CD4-positive, alpha-beta memory T cell (primary cell): ENCODE measurements at regions of chr15 and their contacts with region 1.

Region 1: GRCh38 chr15:52179278-52180195 is 11.7 kb downstream of the GNB5 start:
- DNase-seq: peak; percentile 89 to 93 (median 92)
- H3K4me3 ChIP-seq: peak overlapping the region; percentile 31 to 57
- H3K4me3 Mint-ChIP-seq: peak overlapping the region; percentile 93 to 97 (median 95)
- H3K27ac ChIP-seq: peak overlapping the region; percentile 96
- H3K27ac Mint-ChIP-seq: peak overlapping the region; percentile 89 to 99 (median 99)
- H3K4me1 ChIP-seq: peaks cover 26% of the 10 kb centered on the region
- H3K4me1 Mint-ChIP-seq: peaks cover 21 to 52% (median 36%) of the 10 kb centered on the region in 4 donors
- H3K27me3 ChIP-seq: no peaks in the 10 kb centered on the region
- H3K27me3 Mint-ChIP-seq: no peaks in the 10 kb centered on the region

Region 2: GRCh38 chr15:51737280-51738017 is 442.1 kb before region 1 on chr15 and contains the start of gene LYSMD2:
- CTCF ChIA-PET with region 1: no interaction called
- POLR2A ChIA-PET with region 1: interaction called, 5 read pairs
- intact Hi-C with region 1: loop called (anchors 5 kb)
- DNase-seq: peak; percentile 66 to 75 (median 72)
- H3K4me3 ChIP-seq: peak within 1 kb of the TSS; percentile 57 to 62
- H3K4me3 Mint-ChIP-seq: peak within 1 kb of the TSS; percentile 90 to 97 (median 92)
- H3K27ac ChIP-seq: peak within 1 kb of the TSS; percentile 65
- H3K27ac Mint-ChIP-seq: peak within 1 kb of the TSS; percentile 97 to 98 (median 98)
- H3K4me1 ChIP-seq: peaks cover 66% of the 10 kb centered on the region
- H3K4me1 Mint-ChIP-seq: peaks cover 45 to 66% (median 53%) of the 10 kb centered on the region in 4 donors
- H3K27me3 ChIP-seq: no peaks in the 10 kb centered on the region
- H3K27me3 Mint-ChIP-seq: no peaks in the 10 kb centered on the region
- total RNA-seq, gene LYSMD2: 33.0 to 35.2 TPM

Region 3: DNA sequence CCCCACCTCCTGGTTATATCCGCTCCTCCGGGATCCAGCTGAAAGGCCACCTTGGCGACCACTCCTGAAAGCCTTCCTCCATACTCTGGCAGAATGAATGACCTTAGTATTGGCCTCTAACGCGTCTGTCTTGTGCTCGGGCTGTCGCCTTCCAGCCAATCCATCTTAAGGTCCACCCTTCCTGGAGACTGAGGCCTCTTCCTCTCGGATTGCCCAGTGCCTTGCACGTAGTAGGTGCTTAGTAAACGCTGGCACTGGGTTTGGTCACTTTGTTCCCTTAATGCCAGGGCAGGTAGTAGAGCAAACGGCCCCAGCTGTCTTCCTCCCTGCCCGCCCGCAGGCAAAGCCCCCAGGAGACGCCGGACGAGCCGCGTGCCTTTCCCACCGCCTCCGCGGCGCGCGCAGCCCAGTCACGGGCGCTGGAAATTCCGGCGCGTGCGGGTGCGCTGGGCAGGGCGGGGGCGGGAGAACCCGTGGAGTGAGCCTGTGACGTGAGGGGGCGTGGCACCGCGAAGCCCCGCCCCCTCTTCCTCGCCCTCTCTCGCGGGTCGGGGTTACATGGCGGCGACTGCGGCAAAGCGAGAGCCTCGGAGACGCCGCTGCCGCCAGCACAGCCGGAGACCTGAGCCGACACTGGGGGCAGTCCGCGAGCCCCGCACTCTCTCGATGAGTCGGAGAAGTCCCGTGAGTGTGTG is 160.7 kb before region 1 on chr15 and contains the start of gene MAPK6:
- CTCF ChIA-PET with region 1: interaction called, 4 read pairs
- POLR2A ChIA-PET with region 1: interaction called, 18 read pairs
- intact Hi-C with region 1: loop called (anchors 1 kb)
- DNase-seq: peak; percentile 91 to 94 (median 94)
- H3K4me3 ChIP-seq: peak within 1 kb of the TSS; percentile 59 to 78
- H3K4me3 Mint-ChIP-seq: peak within 1 kb of the TSS; percentile 94 to 99 (median 97)
- H3K27ac ChIP-seq: peak within 1 kb of the TSS; percentile 89
- H3K27ac Mint-ChIP-seq: peak within 1 kb of the TSS; percentile 98 to 99 (median 98)
- H3K4me1 ChIP-seq: peaks cover 41% of the 10 kb centered on the region
- H3K4me1 Mint-ChIP-seq: peaks cover 25 to 54% (median 38%) of the 10 kb centered on the region in 4 donors
- H3K27me3 ChIP-seq: no peaks in the 10 kb centered on the region
- H3K27me3 Mint-ChIP-seq: no peaks in the 10 kb centered on the region
- total RNA-seq, gene MAPK6: 18.2 to 24.0 TPM

Region 4: DNA sequence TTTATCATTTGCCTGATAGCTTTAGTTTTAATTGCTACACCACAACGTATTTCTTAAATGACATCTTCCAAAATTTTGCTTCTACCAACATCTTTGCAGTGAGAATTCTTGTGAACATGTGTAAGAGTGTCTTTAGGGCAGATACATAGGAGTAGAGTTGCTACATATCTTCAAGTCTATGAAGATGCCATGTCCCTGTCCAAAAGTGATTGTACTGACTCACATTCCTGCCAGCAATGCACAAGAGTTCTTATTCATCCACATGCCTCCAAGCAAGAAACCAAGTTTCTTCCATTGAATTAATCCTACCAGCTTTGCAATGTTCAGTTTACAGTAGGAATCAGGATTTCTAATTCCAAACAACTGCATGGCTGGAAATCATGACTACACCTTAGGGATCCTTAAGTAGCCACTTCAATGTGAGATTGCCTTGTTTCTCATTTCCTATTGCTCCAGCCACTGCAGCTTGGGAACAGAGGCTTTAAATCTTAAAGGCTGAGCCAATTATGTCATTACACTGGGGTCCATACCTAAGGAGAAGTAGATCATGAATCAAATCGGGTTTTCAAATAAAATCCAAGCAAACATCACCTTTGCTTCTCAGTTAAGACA is 111.4 kb before region 1 on chr15:
- CTCF ChIA-PET with region 1: no interaction called
- POLR2A ChIA-PET with region 1: no interaction called
- intact Hi-C with region 1: no loop called
- DNase-seq: no peak
- H3K4me3 ChIP-seq: no peak overlapping the region
- H3K4me3 Mint-ChIP-seq: no peak overlapping the region
- H3K27ac ChIP-seq: no peak overlapping the region
- H3K27ac Mint-ChIP-seq: peak overlapping the region in 3 of 7 donors; percentile 1 to 20 (median 7)
- H3K4me1 ChIP-seq: peaks cover 7% of the 10 kb centered on the region
- H3K4me1 Mint-ChIP-seq: peaks cover 9 to 14% (median 11%) of the 10 kb centered on the region in 4 donors
- H3K27me3 ChIP-seq: no peaks in the 10 kb centered on the region
- H3K27me3 Mint-ChIP-seq: no peaks in the 10 kb centered on the region

Region 5: DNA sequence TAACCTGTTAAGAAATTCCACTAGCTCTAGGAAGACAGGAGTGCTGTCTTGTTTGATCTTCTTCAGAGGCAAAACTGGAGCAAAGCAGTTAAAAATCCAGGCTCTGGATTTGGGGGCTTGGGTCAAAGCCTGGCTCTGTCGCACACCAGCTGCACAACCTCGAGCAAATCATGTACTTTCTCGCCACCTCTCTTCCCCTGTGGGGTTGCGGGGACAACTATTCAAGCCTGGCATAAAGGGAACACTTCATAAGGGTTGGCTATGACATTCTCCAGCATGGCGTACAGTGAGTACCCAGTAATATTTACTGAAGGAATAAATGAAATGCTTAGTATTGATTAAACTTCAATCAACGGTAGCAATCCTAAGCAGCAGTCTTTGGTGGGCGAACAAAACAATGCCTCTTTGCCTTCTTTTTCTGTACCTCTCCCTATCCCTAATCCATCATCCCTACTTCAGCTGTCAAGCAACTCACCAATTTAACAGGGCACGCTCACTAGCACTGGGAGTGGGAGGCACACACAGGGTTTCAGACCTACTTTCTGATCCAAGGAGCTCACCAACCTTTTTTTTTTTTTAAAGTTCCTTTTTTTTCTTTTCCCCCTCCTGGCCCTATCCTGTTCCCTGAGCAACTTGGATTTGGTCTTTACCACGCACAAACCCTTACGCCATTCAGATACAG is 21.3 kb before region 1 on chr15:
- CTCF ChIA-PET with region 1: interaction called, 29 read pairs
- POLR2A ChIA-PET with region 1: interaction called, 12 read pairs
- intact Hi-C with region 1: no loop called
- DNase-seq: no peak
- H3K4me3 ChIP-seq: no peak overlapping the region
- H3K4me3 Mint-ChIP-seq: no peak overlapping the region
- H3K27ac ChIP-seq: no peak overlapping the region
- H3K27ac Mint-ChIP-seq: no peak overlapping the region
- H3K4me1 ChIP-seq: no peaks in the 10 kb centered on the region
- H3K4me1 Mint-ChIP-seq: peaks cover 4 to 8% (median 6%) of the 10 kb centered on the region in 4 donors
- H3K27me3 ChIP-seq: no peaks in the 10 kb centered on the region
- H3K27me3 Mint-ChIP-seq: no peaks in the 10 kb centered on the region

Region 6: DNA sequence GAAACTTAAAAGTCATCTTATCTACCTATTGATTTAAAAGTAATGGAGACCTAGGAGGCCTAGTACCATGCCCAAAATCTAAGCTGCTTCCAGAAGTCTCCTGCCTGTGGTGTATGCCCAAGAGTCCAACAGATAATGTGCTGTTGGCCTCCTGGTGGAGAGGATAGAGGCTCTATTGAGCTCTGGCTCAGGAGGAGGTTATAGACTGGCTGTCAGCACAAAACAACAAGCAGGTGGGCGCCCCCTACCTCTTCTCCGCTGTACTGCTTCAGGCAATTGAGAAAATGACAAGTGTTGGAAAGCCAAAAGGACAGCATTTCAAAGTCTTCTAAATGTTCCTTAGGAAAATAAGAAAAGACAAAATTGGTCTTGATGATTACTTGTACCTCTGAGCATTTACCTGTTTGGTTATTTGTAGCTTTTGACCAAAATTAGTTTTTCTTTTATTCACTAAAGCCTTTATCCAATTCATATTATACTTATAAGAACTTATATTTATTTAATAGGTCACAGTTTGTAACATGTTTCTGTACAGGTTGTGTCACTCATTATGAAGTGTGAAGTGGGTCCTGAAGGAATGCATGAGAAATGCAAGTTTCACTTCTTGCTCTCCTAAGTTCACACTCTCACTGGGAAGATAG is 28.9 kb after region 1 on chr15:
- CTCF ChIA-PET with region 1: interaction called, 27 read pairs
- POLR2A ChIA-PET with region 1: interaction called, 25 read pairs
- intact Hi-C with region 1: loop called (anchors 1 kb)
- DNase-seq: peak; percentile 69 to 78 (median 72)
- H3K4me3 ChIP-seq: no peak overlapping the region
- H3K4me3 Mint-ChIP-seq: no peak overlapping the region
- H3K27ac ChIP-seq: no peak overlapping the region
- H3K27ac Mint-ChIP-seq: peak overlapping the region in 4 of 7 donors; percentile 43 to 84 (median 66)
- H3K4me1 ChIP-seq: no peaks in the 10 kb centered on the region
- H3K4me1 Mint-ChIP-seq: peaks cover 0 to 4% (median 1%) of the 10 kb centered on the region in 4 donors
- H3K27me3 ChIP-seq: no peaks in the 10 kb centered on the region
- H3K27me3 Mint-ChIP-seq: no peaks in the 10 kb centered on the region

Region 7: DNA sequence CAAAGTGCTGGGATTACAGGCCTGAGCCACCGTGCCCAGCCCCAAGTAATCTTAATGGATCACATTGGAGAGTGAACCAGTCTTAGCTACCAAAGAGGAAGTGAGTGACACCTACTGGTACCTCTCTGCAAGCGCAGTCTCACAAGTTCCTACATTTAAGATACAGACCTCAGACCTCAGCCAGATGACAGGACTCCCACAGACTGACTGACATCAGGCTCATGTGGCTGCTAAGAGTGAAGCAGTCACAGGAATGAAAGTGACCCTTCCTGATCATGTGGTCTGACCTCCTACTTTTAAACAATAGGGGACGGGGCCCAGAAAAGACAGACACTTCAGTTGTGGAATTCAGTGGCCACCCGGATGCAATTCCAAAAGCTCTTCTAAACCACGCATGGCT is 47.9 kb after region 1 on chr15:
- CTCF ChIA-PET with region 1: interaction called, 33 read pairs
- POLR2A ChIA-PET with region 1: interaction called, 60 read pairs
- intact Hi-C with region 1: loop called (anchors 1 kb)
- DNase-seq: peak; percentile 68 to 78 (median 69)
- H3K4me3 ChIP-seq: no peak overlapping the region
- H3K4me3 Mint-ChIP-seq: no peak overlapping the region
- H3K27ac ChIP-seq: no peak overlapping the region
- H3K27ac Mint-ChIP-seq: peak overlapping the region in 1 of 7 donors; percentile 60
- H3K4me1 ChIP-seq: peaks cover 8% of the 10 kb centered on the region
- H3K4me1 Mint-ChIP-seq: peaks cover 10 to 21% (median 14%) of the 10 kb centered on the region in 4 donors
- H3K27me3 ChIP-seq: no peaks in the 10 kb centered on the region
- H3K27me3 Mint-ChIP-seq: no peaks in the 10 kb centered on the region

Region 8: DNA sequence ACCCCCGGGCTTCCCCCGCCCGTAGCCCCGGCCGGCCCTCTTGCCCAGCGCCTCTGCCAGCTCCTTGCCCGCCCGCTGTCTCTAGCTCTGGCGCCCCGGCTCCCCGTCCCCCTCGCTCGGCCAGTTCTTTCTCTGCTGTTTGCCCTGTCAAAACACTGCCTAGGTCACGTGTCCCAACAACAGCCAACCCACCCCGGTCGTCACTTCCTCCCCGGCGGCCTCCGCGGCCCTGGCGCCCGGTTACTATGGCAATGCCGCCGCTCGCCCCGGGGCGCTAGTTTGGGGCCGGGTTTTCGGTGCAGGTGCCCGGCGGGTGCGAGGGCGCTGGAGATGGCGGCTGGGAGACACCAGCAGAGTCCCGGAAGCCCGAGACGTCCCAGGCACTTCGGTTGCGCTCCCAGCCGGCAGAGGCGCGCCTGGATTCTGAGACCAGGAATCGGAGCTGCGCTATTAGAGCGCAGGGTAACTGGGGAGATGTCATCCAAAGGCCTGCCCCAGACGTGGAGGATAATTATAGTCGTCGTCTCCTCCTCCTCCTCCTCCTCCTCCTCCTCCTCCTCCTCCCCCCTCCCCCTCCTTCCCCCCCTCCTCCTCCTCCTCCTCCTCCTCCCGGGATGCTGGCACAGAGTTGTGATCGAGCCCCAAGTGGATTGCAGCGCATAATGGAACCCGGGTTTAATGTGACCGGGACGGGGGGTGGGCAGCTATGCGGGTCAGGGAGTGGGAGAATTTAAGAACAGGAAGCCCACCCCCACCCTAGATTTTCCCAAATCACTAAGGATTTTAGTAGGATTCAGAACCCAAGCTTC is 499.9 kb after region 1 on chr15 and contains the start of gene ATOSA:
- CTCF ChIA-PET with region 1: no interaction called
- POLR2A ChIA-PET with region 1: interaction called, 8 read pairs
- intact Hi-C with region 1: loop called (anchors 1 kb)
- DNase-seq: peak; percentile 91 to 96 (median 92)
- H3K4me3 ChIP-seq: peak within 1 kb of the TSS; percentile 55 to 82
- H3K4me3 Mint-ChIP-seq: peak within 1 kb of the TSS; percentile 93 to 99 (median 99)
- H3K27ac ChIP-seq: peak within 1 kb of the TSS; percentile 97
- H3K27ac Mint-ChIP-seq: peak within 1 kb of the TSS; percentile 93 to 100 (median 100)
- H3K4me1 ChIP-seq: peaks cover 61% of the 10 kb centered on the region
- H3K4me1 Mint-ChIP-seq: peaks cover 28 to 80% (median 41%) of the 10 kb centered on the region in 4 donors
- H3K27me3 ChIP-seq: no peaks in the 10 kb centered on the region
- H3K27me3 Mint-ChIP-seq: no peaks in the 10 kb centered on the region
- total RNA-seq, gene ATOSA: 95.6 to 97.1 TPM